ENCODE measurements at regions of chr19 and their contacts with region 1.

Region 1: GRCh38 chr19:13262450-13262849 is 112.2 kb downstream of the IER2 start:
- DNase-seq: no peak
- H3K4me3 Mint-ChIP-seq: no peak overlapping the region
- H3K27ac Mint-ChIP-seq: no peak overlapping the region
- H3K4me1 Mint-ChIP-seq: peaks cover 25% of the 10 kb centered on the region
- H3K27me3 Mint-ChIP-seq: peaks cover 12% of the 10 kb centered on the region
- CTCF ChIP-seq: no peak

Region 2: DNA sequence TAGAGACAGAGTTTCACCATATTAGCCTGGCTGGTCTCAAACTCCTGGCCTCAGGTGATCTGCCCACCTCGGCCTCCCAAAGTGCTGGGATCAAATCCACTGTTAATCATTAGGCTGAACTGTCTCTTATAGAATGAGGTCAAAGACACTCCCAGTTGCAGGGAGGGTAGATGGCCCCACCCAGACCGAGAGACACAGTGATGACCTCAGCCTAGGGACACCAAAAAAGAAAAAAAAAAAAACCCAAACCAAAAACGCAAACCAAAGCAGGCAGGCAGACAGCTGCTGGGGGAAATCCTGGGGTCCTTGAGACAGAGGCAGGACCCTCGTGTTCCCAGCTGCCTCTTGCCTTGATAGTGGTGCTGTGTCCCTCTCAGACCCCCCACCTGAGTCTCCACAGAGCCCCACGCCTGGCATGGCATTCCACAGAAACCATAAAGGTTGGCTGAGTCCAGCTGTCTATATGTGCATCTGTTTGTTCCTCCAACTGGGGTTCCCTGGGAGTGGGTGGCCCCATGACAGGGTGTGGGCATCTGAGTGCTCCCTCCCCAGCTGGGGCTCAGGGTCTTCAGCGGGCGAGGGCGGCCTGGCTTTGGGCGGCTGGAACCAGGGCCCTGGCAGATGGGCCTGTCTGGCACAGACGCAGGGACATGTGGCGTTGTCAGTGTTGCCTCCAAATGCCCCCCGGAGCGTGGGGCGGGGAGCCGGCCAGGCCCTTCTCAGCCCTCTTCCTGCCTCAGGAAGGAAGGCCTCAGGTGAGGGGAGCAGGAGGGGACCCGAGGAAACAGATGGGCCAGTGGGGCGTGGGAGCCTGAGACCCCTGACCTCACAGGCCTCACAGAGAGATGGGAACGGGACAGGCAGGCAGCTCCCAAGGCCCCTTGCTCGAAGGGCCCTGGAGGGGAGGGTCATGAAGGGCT is 287.9 kb before region 1 on chr19:
- CTCF ChIA-PET with region 1: interaction called, 5 read pairs
- intact Hi-C with region 1: loop called (anchors 10 kb)
- DNase-seq: no peak
- H3K4me3 Mint-ChIP-seq: no peak overlapping the region
- H3K27ac Mint-ChIP-seq: no peak overlapping the region
- H3K4me1 Mint-ChIP-seq: no peaks in the 10 kb centered on the region
- H3K27me3 Mint-ChIP-seq: no peaks in the 10 kb centered on the region
- CTCF ChIP-seq: no peak

Region 3: GRCh38 chr19:13104360-13104847 is 158.0 kb before region 1 on chr19:
- CTCF ChIA-PET with region 1: no interaction called
- intact Hi-C with region 1: loop called (anchors 5 kb)
- DNase-seq: no peak
- H3K4me3 Mint-ChIP-seq: no peak overlapping the region
- H3K27ac Mint-ChIP-seq: no peak overlapping the region
- H3K4me1 Mint-ChIP-seq: no peaks in the 10 kb centered on the region
- H3K27me3 Mint-ChIP-seq: no peaks in the 10 kb centered on the region
- CTCF ChIP-seq: no peak

Region 4: GRCh38 chr19:13162518-13163314 is 99.7 kb before region 1 on chr19:
- CTCF ChIA-PET with region 1: no interaction called
- intact Hi-C with region 1: loop called (anchors 5 kb)
- DNase-seq: peak; percentile 97
- H3K4me3 Mint-ChIP-seq: peak overlapping the region; percentile 61
- H3K27ac Mint-ChIP-seq: peak overlapping the region; percentile 98
- H3K4me1 Mint-ChIP-seq: peaks cover 20% of the 10 kb centered on the region
- H3K27me3 Mint-ChIP-seq: no peaks in the 10 kb centered on the region
- CTCF ChIP-seq: no peak

Region 5: DNA sequence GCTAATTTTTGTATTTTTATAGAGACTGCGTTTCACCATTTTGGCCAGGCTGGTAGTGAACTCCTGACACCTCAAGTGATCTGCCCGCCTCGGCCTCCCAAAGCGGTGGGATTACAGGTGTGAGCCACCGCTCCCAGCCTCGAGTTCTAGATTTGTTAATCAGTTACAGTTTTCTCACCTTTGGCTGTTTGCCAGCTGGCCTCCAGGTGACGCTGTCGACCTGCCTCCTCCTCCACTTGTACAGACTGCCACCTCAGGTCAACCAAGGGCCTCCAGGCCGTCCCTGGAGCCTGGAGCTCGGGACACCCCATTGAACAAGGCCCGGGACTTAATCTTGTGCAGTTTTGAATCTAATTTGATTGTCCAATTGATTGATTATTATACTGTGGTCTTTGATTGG is 66.8 kb before region 1 on chr19:
- CTCF ChIA-PET with region 1: no interaction called
- intact Hi-C with region 1: loop called (anchors 1 kb)
- DNase-seq: peak; percentile 64
- H3K4me3 Mint-ChIP-seq: peak overlapping the region; percentile 26
- H3K27ac Mint-ChIP-seq: peak overlapping the region; percentile 47
- H3K4me1 Mint-ChIP-seq: peaks cover 11% of the 10 kb centered on the region
- H3K27me3 Mint-ChIP-seq: no peaks in the 10 kb centered on the region
- CTCF ChIP-seq: no peak

Region 6: GRCh38 chr19:13241231-13242104 is 21.0 kb before region 1 on chr19:
- CTCF ChIA-PET with region 1: no interaction called
- intact Hi-C with region 1: no loop called
- DNase-seq: peak; percentile 30
- H3K4me3 Mint-ChIP-seq: no peak overlapping the region
- H3K27ac Mint-ChIP-seq: no peak overlapping the region
- H3K4me1 Mint-ChIP-seq: peaks cover 30% of the 10 kb centered on the region
- H3K27me3 Mint-ChIP-seq: no peaks in the 10 kb centered on the region
- CTCF ChIP-seq: no peak

Region 7: GRCh38 chr19:13302526-13303270 is 40.2 kb after region 1 on chr19:
- CTCF ChIA-PET with region 1: no interaction called
- intact Hi-C with region 1: no loop called
- DNase-seq: peak; percentile 4
- H3K4me3 Mint-ChIP-seq: no peak overlapping the region
- H3K27ac Mint-ChIP-seq: no peak overlapping the region
- H3K4me1 Mint-ChIP-seq: no peaks in the 10 kb centered on the region
- H3K27me3 Mint-ChIP-seq: peaks cover 79% of the 10 kb centered on the region
- CTCF ChIP-seq: no peak